ENCODE measurements at regions of chr12 and their contacts with region 1.

Region 1: DNA sequence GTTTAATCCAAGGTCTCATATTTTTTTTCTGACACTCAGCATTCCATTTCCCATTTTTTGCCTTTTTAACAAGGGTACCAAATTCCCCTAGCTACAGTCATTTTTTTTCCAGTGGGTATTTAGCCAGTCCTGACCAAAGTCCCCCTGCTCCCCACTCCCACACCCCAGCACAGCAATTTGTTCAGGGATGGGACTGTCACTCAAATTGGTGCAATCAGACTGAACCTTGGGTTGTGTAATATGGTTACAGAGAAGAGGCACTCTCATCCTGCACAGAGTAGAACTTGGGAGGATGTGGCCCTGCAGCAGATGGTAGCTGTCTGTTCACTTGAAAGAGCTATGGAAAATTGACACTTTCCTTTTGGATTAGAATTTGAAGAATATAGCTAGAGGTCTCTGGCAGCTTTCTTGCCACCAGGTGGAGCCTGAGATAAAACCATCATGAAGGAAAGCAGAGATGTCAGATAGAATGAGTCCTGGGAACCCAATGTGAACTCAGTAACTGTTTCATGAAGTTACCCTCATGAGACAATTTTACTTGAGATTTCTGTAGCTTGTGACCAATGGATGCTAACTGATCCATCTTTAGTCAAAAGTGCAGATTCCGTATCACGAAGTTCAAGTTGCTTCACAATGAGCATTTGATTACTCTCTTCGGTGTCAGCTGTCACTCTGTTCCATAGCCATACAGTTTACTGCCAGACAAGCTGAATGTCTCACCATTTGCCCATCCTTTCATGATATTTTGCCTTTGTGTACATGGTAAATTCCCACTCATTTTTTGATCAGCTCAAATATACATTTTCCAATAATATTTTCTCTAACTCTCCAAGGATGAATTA is 394.0 kb upstream of the SYT1 start:
- DNase-seq: peak; percentile 27
- ATAC-seq: peak; percentile 76
- H3K4me3 ChIP-seq: no peak overlapping the region
- H3K27ac ChIP-seq: no peak overlapping the region
- H3K4me1 ChIP-seq: no peaks in the 10 kb centered on the region
- H3K27me3 ChIP-seq: no peaks in the 10 kb centered on the region
- CTCF ChIP-seq: peak; percentile 41; the same call in 1 of the 2 replicates
- EP300 ChIP-seq: no peak
- POLR2A ChIP-seq: no peak
- RAD21 ChIP-seq: no peak

Region 2: DNA sequence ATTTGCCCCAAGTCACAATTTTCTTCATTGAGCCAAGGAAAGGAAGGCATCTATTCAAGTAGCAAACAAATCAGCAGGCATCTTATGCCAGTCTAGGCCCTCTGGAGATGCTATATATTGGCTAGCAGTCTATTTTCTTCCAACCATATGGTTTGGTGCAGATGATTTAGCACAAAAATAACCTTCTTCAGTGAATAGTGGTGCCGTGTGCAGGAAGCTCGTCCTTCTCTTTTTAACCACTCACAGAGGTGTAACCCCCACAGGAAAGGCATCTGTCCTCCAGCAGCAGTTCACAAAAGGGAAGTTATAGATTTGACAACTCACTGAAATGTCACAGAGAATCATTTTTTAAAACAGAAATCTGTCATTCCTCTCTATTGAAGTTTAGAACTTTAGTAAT is 51.7 kb before region 1 on chr12:
- CTCF ChIA-PET with region 1: no interaction called
- POLR2A ChIA-PET with region 1: no interaction called
- in situ Hi-C with region 1: no loop called
- intact Hi-C with region 1: no loop called
- DNase-seq: no peak
- ATAC-seq: no peak
- H3K4me3 ChIP-seq: no peak overlapping the region
- H3K27ac ChIP-seq: no peak overlapping the region
- H3K4me1 ChIP-seq: no peaks in the 10 kb centered on the region
- H3K27me3 ChIP-seq: no peaks in the 10 kb centered on the region
- CTCF ChIP-seq: no peak
- EP300 ChIP-seq: no peak
- POLR2A ChIP-seq: no peak
- RAD21 ChIP-seq: no peak

Region 3: DNA sequence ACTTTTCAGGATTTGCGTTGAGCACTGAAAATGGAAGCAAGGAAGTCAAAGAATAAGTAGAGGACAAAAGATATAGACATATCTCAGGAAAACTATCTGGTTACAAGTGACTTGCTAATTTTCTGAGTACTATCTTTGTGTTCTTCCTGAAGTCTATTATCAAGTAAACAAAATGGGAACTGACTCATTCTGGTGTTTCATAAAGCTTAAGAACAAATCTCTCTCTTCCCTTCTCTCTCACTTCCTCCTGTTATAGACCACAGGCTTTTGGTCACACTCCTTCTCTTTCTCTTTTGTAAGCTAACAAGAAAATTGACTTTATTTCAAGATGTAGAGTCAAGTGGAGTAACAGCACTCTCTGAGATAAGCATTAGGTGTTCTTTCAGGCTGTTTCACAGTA is 12.6 kb before region 1 on chr12:
- CTCF ChIA-PET with region 1: no interaction called
- POLR2A ChIA-PET with region 1: no interaction called
- in situ Hi-C with region 1: no loop called
- intact Hi-C with region 1: no loop called
- DNase-seq: no peak
- ATAC-seq: no peak
- H3K4me3 ChIP-seq: no peak overlapping the region
- H3K27ac ChIP-seq: no peak overlapping the region
- H3K4me1 ChIP-seq: no peaks in the 10 kb centered on the region
- H3K27me3 ChIP-seq: no peaks in the 10 kb centered on the region
- CTCF ChIP-seq: no peak
- EP300 ChIP-seq: no peak
- POLR2A ChIP-seq: no peak
- RAD21 ChIP-seq: no peak

Region 4: GRCh38 chr12:78584695-78585531 is 114.3 kb after region 1 on chr12:
- CTCF ChIA-PET with region 1: no interaction called
- POLR2A ChIA-PET with region 1: no interaction called
- in situ Hi-C with region 1: no loop called
- intact Hi-C with region 1: loop called (anchors 1 kb)
- DNase-seq: peak; percentile 6
- ATAC-seq: peak; percentile 48; the same call in 2 of the 3 replicates
- H3K4me3 ChIP-seq: no peak overlapping the region
- H3K27ac ChIP-seq: no peak overlapping the region
- H3K4me1 ChIP-seq: no peaks in the 10 kb centered on the region
- H3K27me3 ChIP-seq: no peaks in the 10 kb centered on the region
- CTCF ChIP-seq: peak; percentile 42; the same call in 1 of the 2 replicates
- EP300 ChIP-seq: no peak
- POLR2A ChIP-seq: no peak
- RAD21 ChIP-seq: no peak

Measured in HepG2 (cell line).